ENCODE measurements at regions of chr16 and their contacts with region 1.

Region 1: DNA sequence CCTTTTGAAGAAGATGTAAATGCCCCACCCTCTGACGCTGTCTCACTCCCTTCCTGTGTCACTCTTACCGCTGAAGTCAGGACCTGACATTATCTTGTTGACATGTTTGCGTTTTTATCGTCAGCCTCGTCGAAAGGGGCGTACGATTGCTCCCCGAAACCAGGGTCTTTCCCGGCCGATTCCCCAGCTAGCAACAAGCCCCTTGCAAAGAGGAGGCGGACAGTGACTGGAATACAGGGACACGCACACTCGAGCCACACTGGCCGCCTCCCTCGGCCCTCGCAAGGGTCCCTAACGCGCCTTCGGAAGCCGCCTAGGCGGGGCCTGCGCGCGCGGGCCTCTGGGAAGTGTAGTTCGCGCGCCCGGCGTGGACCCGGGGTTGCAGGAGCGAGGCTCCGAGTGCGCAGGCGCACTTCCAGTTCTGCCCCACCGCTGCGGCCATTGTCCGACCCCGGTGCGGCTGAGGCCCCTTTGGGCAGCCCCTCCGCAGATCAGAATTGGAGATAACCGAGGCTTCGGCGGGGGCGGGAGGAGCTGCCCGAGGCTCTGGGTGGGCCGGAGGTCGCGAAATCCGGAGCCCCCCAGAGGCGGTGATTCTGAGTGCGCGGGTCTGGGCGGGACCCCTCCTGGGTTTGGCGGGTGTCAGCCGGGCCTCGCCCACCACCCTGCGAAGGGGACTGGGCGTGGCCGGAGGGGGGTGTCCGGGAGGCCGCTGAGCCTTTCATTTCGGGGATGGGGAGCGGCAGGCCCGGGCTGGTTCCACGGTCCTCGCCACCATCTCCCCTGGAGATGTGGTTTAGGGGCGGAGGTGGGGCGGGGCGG is at the start of gene ZFP90:
- DNase-seq: peak; percentile 93 to 98 (median 96)
- ATAC-seq: peak; percentile 99 to 100
- H3K4me3 ChIP-seq: peak within 1 kb of the TSS; percentile 93
- H3K27ac ChIP-seq: peak within 1 kb of the TSS; percentile 34
- H3K4me1 ChIP-seq: no peaks in the 10 kb centered on the region
- H3K27me3 ChIP-seq: no peaks in the 10 kb centered on the region
- total RNA-seq, gene ZFP90: 12.2 to 14.3 (median 12.5) TPM

Region 2: DNA sequence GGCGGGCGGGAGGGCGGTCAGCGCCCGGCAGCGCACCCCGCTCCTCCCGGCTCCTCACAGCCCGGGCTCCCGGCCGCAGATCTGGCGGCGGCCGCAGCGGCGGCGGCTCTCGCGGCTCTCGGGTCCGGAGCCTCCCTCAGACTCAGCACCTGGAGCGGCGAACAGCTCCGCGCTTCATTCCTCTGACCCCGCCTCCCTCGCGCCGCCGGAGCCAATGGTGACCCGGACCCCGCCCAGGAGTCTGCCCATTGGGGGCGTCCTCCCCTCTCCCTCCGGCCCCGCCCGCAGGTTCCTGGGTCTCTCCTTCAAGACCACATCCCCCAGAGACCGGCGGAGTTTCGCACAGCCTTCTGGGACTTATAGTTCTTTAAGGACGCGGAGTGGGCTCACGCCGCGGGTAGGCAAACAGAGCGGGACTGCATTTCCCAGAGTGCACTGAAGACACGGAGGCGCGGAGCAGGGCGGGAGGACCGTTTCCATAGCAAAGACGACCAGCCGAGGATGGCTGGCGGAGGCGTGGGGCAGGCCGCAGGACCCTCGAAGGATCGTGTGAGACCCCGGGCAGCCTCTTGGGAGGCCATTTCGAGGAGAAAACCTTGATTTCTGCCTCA is 90.6 kb before region 1 on chr16 and contains the start of gene SMPD3:
- intact Hi-C with region 1: no loop called
- DNase-seq: peak; percentile 99
- ATAC-seq: peak; percentile 99
- H3K4me3 ChIP-seq: peak within 1 kb of the TSS; percentile 29
- H3K27ac ChIP-seq: no peak within 1 kb of the TSS
- H3K4me1 ChIP-seq: peaks cover 3% of the 10 kb centered on the region
- H3K27me3 ChIP-seq: no peaks in the 10 kb centered on the region
- total RNA-seq, gene SMPD3: 0.17 to 0.94 (median 0.51) TPM

Region 3: DNA sequence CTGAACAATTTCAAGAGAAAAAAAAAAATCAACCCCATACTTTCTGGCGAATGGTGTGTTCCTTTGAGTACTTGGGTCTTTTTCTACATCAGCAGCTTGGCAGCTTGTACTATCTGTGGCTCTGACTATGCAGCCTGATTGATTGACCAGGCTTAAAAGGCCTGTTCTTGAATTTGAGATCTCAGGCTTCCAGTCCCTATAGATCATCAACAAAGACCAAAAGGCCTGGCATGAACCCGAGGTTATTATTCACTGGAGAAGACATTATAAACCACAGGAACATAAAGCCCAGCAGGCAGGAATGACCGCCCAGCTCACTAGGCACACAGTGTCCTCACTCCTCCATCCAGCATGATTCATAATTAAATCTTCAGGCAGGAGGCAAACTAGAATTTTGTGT is 73.9 kb after region 1 on chr16:
- intact Hi-C with region 1: no loop called
- DNase-seq: no peak
- ATAC-seq: no peak
- H3K4me3 ChIP-seq: no peak overlapping the region
- H3K27ac ChIP-seq: no peak overlapping the region
- H3K4me1 ChIP-seq: no peaks in the 10 kb centered on the region
- H3K27me3 ChIP-seq: no peaks in the 10 kb centered on the region

Region 4: DNA sequence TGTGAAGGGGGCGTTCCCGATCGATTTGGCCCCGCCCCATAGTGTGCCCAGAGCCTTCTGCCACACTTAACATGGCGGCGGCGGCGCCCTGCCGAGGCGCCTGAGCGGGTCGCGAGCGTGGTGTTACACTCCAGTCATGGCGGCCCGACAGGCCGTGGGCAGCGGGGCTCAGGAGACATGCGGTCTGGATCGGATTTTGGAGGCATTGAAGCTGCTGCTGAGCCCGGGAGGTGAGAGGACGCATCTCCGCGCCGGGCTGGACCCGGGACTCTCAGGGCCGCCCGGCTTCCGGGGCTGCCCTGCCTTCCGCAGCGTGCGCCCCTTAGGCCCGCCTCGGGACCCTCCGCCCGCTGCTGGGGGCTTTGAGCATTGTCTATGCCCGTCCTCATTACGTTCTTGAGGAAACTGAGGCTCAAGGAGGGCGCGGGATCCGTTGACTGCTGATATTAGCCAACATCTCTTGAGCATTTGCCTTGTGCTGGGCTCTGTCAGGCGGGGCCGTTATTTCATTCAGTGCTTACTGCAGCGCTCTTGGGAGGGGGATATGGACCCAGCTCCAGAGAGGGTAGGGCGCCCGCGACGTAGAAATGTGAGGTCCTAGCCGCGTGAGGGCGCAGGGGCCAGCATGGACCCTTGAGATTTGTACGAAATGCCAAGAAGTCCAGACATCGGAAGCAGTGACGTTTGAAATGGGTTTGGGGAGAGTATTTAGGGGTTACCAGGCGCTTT is 304.6 kb after region 1 on chr16 and contains the start of gene TANGO6:
- intact Hi-C with region 1: loop called in 1 of 4 experiments (anchors 10 kb)
- DNase-seq: peak; percentile 90 to 96 (median 95)
- ATAC-seq: peak; percentile 99
- H3K4me3 ChIP-seq: peak within 1 kb of the TSS; percentile 98
- H3K27ac ChIP-seq: peak within 1 kb of the TSS; percentile 91
- H3K4me1 ChIP-seq: no peaks in the 10 kb centered on the region
- H3K27me3 ChIP-seq: no peaks in the 10 kb centered on the region
- total RNA-seq, gene TANGO6: 8.8 to 11.5 (median 10.0) TPM

Region 5: GRCh38 chr16:68915589-68915988 is 376.5 kb after region 1 on chr16:
- intact Hi-C with region 1: no loop called
- DNase-seq: no peak
- ATAC-seq: no peak
- H3K4me3 ChIP-seq: no peak overlapping the region
- H3K27ac ChIP-seq: no peak overlapping the region
- H3K4me1 ChIP-seq: no peaks in the 10 kb centered on the region
- H3K27me3 ChIP-seq: no peaks in the 10 kb centered on the region

Region 6: DNA sequence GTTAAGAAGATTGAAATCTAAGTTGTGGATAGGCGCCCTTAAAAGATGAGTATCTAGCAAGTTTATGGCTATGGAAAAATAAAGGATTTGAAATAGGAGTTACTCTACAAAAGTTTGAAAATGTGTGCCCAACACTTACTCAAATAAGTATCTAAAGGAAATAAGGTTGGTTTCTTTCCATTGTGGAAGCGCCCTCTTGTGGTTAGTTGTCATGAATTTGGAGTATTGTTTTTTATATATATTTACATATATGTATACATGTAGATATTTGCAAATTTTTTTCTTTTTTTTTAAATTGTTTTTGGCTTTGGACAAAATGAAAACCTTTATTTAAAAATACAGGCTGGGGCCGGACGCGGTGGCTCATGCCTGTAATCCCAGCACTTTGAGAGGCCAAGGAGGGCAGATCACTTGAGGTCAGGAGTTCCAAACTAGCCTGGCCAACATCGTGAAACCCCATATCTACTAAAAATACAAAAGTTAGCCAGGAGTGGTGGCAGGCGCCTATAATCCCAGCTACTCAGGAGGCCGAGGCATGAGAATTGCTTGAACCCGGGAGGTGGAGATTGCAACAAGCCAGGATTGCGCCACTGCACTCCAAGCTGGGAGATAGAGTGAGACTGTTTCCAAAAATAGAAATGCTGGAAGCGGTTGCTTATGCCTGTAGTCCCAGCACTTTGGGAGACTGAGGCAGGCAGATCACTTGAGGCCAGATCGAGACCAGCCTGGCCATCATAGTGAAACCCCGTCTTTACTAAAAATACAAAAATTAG is 748.0 kb after region 1 on chr16:
- intact Hi-C with region 1: loop called in 1 of 4 experiments (anchors 10 kb)
- DNase-seq: peak; percentile 78 to 88 (median 79)
- ATAC-seq: peak; percentile 79 to 90
- H3K4me3 ChIP-seq: no peak overlapping the region
- H3K27ac ChIP-seq: no peak overlapping the region
- H3K4me1 ChIP-seq: no peaks in the 10 kb centered on the region
- H3K27me3 ChIP-seq: no peaks in the 10 kb centered on the region

Measured in right cardiac atrium (tissue), 5 donors.